Aorta (tissue), 5 donors: ENCODE measurements at regions of chr20 and their contacts with region 1.

Region 1: GRCh38 chr20:44866703-44867335 is 18.7 kb upstream of the YWHAB start:
- DNase-seq: no peak
- ATAC-seq: no peak
- H3K4me3 ChIP-seq: no peak overlapping the region
- H3K27ac ChIP-seq: no peak overlapping the region
- H3K4me1 ChIP-seq: peaks cover 3 to 4% of the 10 kb centered on the region in 2 donors
- H3K27me3 ChIP-seq: no peaks in the 10 kb centered on the region

Region 2: DNA sequence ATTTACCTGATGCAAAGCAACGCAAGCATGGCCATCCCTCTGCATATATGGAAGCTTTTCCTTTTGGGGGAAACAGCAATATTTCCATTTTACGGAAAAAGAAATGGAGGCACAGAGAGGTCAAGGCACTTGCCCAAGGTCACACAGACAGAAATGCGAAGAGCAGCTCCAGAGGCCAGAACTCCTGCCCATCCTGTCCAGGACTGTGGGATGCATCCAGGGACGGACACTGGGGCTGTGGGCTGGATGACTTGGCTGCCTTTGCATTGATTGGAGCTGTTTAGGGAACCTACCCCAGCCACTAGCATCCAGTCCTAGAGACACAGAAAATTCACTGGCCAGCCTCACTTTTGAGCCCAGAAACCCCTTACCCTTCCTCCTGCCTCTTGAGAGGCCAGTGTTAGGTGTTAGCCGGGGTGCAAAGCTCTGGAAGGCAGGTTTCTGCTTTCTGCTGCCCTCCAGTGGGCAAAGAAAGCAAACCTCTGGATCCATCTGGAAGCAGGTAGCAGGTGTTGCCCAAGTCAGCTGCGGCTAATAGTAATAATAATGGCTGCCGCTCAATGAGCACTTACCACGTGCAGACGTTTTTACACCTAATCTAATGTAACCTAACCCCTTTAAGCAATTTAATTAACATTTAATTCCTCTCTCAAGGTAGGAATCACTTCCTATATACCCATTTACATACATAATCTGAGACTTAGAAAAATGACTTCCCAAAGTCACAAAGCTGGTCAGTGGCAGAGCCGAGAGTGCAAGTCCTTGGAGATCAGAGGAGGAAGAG is 183.4 kb before region 1 on chr20:
- intact Hi-C with region 1: loop called (anchors 5 kb)
- DNase-seq: no peak
- ATAC-seq: no peak
- H3K4me3 ChIP-seq: no peak overlapping the region
- H3K27ac ChIP-seq: no peak overlapping the region
- H3K4me1 ChIP-seq: no peaks in the 10 kb centered on the region
- H3K27me3 ChIP-seq: no peaks in the 10 kb centered on the region

Region 3: GRCh38 chr20:44747166-44748004 is 119.4 kb before region 1 on chr20:
- intact Hi-C with region 1: loop called (anchors 1 to 2 kb)
- DNase-seq: peak; percentile 85 to 92
- ATAC-seq: peak; percentile 73
- H3K4me3 ChIP-seq: peak overlapping the region in 1 of 2 donors; percentile 18
- H3K27ac ChIP-seq: peak overlapping the region in 1 of 2 donors; percentile 18
- H3K4me1 ChIP-seq: peaks cover 0 to 5% of the 10 kb centered on the region in 2 donors
- H3K27me3 ChIP-seq: no peaks in the 10 kb centered on the region

Region 4: DNA sequence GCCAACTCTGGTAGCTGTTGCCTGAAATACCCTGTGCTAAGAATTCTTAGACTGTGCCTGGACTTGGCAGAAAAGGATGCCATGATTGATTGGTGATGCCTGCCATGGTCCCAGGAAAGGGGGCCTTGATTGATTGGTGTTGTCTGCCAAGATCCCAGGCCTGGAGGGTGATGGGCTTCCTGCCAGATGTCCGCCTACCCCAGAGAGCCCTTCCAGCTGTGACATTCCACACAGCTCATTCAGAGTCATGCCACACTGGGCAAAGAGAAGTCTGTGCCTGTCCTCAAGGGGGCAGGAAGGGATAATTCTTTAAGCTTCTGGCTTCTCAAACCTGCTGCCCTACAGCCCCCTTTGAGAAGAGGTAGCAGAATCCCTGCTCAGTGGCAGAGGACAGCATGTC is 81.0 kb before region 1 on chr20:
- intact Hi-C with region 1: loop called in 1 of 2 experiments (anchors 2 kb)
- DNase-seq: no peak
- ATAC-seq: no peak
- H3K4me3 ChIP-seq: no peak overlapping the region
- H3K27ac ChIP-seq: no peak overlapping the region
- H3K4me1 ChIP-seq: no peaks in the 10 kb centered on the region
- H3K27me3 ChIP-seq: no peaks in the 10 kb centered on the region

Region 5: GRCh38 chr20:44810391-44811149 is 56.2 kb before region 1 on chr20 and contains the start of gene RIMS4:
- intact Hi-C with region 1: loop called in 1 of 2 experiments (anchors 5 kb)
- DNase-seq: no peak
- ATAC-seq: no peak
- H3K4me3 ChIP-seq: peak within 1 kb of the TSS; percentile 18 to 77
- H3K27ac ChIP-seq: no peak within 1 kb of the TSS
- H3K4me1 ChIP-seq: no peaks in the 10 kb centered on the region
- H3K27me3 ChIP-seq: no peaks in the 10 kb centered on the region
- total RNA-seq, gene RIMS4: 2.8 to 16.6 TPM